Activated CD4-positive, alpha-beta memory T cell treated with anti-CD3 and anti-CD28 coated beads for 36 hours (primary cell): ENCODE measurements at regions of chr6 and their contacts with region 1.

Region 1: DNA sequence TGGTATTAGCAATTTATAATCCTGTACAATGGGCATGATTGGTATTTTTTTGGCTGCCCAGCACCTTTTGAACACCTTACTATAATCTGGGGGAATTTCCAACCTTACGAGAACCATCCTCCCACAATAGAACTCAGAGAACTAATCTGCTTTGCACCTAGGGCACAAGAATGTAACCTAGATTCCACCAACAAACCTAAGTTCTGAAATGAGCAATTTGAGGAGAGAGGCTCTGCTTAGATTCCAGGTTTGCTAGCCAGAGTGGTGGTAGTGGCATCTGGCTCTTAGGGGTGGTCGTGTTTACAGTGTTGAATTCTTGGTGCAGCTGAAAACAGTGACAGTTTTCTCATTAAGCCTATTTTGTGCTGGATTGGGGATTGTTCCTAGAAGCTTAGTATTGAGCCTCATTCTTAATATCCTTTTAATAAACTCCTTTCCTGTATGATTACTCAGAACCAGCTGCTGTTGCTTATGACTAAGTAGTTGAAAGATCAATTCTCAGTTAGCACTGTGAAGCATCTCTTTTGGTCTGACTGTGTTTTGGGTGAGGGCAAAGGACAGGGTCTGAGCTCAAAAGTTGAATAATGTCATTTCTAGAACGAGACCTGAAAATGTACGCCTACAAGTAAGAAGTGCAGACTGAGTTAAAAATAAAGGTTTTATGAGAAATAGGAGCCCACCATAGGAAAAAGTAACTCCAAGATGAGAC is 385.6 kb downstream of the CDKAL1 start:
- DNase-seq: peak; percentile 39
- H3K4me3 Mint-ChIP-seq: no peak overlapping the region
- H3K27ac Mint-ChIP-seq: peak overlapping the region; percentile 80
- H3K4me1 Mint-ChIP-seq: peaks cover 28% of the 10 kb centered on the region
- H3K27me3 Mint-ChIP-seq: no peaks in the 10 kb centered on the region

Region 2: GRCh38 chr6:20582586-20583446 is 337.0 kb before region 1 on chr6:
- CTCF ChIA-PET with region 1: no interaction called
- POLR2A ChIA-PET with region 1: no interaction called
- intact Hi-C with region 1: loop called (anchors 1 kb)
- DNase-seq: no peak
- H3K4me3 Mint-ChIP-seq: no peak overlapping the region
- H3K27ac Mint-ChIP-seq: no peak overlapping the region
- H3K4me1 Mint-ChIP-seq: peaks cover 28% of the 10 kb centered on the region
- H3K27me3 Mint-ChIP-seq: no peaks in the 10 kb centered on the region

Region 3: DNA sequence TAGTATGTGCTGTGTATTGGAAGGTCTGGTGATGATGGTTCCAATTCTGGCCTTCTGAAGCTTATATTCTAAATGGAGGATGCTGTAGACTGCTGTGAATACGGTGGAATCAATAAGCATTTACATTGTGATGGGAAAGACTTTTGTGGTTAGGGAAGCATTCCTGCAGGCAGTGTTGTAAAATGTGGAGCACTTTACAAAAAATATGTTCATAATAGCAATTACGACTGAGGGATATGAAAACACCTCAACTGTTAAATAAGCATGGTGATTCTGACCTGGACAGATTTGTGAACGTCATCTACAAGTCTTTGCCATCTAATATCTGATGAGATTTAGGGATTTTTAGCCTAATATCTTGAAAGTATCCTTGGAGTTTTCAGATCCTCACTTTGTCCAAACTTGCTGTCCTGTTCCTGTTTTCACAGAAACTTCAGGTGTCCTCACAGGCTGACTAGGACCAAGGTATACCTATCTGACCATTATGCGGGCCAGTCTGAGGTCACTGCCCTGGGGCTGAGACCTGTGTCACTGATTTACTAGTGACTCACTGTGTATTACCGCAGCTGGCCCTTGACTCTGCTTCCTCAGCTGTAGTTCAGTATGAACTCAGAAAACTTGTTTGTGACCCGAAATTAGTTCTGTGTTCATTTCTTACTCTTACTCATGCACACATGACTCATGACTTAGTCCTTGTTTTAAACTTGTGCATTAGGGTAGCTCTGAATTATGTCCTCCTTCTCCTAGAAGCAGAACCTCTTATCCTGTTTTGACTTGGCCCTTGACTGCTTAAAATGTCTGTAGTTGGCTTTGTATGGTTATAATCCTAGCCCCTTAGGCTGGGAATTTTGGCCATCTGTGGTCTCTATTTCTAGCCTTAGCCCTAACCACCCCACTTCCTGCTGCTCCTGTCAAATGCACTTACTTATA is 42.6 kb before region 1 on chr6:
- CTCF ChIA-PET with region 1: interaction called, 3 read pairs
- POLR2A ChIA-PET with region 1: interaction called, 12 read pairs
- intact Hi-C with region 1: loop called (anchors 1 kb)
- DNase-seq: peak; percentile 65
- H3K4me3 Mint-ChIP-seq: no peak overlapping the region
- H3K27ac Mint-ChIP-seq: peak overlapping the region; percentile 65
- H3K4me1 Mint-ChIP-seq: peaks cover 18% of the 10 kb centered on the region
- H3K27me3 Mint-ChIP-seq: no peaks in the 10 kb centered on the region

Region 4: GRCh38 chr6:21180155-21180554 is 260.3 kb after region 1 on chr6:
- CTCF ChIA-PET with region 1: no interaction called
- POLR2A ChIA-PET with region 1: no interaction called
- intact Hi-C with region 1: loop called (anchors 2 kb)
- DNase-seq: no peak
- H3K4me3 Mint-ChIP-seq: no peak overlapping the region
- H3K27ac Mint-ChIP-seq: no peak overlapping the region
- H3K4me1 Mint-ChIP-seq: peaks cover 6% of the 10 kb centered on the region
- H3K27me3 Mint-ChIP-seq: no peaks in the 10 kb centered on the region

Region 5: DNA sequence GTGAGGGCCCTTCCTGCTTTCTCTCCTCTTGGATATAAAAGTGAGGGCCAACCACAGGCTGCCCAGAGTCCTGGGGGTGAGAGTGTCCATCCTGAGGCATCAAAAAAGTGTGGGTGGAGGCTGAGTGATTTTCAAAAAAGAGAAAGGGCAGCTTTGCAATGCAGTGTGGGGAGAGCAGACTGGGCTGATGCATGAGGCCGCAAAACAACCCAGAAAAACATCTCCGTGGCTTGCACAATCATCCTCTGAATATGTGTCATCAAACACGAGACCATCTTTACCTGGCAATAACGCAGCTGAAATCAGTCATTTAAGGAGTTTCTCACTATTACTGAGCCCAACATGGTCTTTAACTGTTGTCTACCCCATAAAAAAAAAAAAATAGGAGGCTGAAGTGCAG is 482.5 kb after region 1 on chr6:
- CTCF ChIA-PET with region 1: no interaction called
- POLR2A ChIA-PET with region 1: no interaction called
- intact Hi-C with region 1: loop called (anchors 1 kb)
- DNase-seq: peak; percentile 72
- H3K4me3 Mint-ChIP-seq: no peak overlapping the region
- H3K27ac Mint-ChIP-seq: no peak overlapping the region
- H3K4me1 Mint-ChIP-seq: peaks cover 11% of the 10 kb centered on the region
- H3K27me3 Mint-ChIP-seq: peaks cover 17% of the 10 kb centered on the region